ENCODE measurements at regions of chr6 and their contacts with region 1.

Region 1: DNA sequence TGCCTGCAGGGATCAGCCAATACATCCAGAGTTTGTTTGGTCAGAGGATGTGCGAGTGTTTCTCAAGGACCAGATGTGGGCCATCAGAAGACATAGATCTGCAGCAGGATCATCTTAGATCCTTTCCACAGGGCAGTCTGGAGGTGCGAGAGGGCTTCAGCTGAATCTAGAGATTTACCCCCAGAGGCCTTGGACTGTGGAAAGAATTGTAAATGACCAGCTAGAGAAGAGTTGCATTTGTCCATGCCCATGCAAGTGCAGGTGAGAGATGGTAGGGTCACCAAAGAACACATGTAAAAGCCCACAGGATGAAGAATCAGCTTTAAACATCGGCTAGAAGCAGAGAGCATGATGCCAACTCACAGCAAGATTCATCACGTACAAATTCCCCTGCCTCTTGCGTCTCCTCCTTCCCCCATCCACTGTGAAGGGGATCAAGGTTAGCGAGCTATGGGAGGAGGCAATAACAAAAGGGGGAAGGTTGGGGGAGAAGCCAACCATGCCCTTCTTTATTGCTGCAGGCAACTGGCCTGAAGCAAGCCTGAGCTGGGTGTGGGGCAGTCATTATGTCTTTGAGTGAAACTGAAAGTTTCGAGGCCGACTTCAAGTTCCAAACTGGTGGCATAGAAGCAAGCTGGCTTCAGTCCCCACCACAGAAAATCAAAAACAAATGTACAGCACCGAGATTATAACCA is 83.5 kb downstream of the SCML4 start:
- DNase-seq: peak in 1 of 5 donors; percentile 44
- H3K4me3 ChIP-seq: peak overlapping the region; percentile 49
- H3K4me3 Mint-ChIP-seq: peak overlapping the region; percentile 10 to 92 (median 83)
- H3K27ac ChIP-seq: peak overlapping the region; percentile 14
- H3K27ac Mint-ChIP-seq: peak overlapping the region; percentile 79 to 96 (median 92)
- H3K4me1 ChIP-seq: peaks cover 66% of the 10 kb centered on the region
- H3K4me1 Mint-ChIP-seq: peaks cover 80 to 95% (median 88%) of the 10 kb centered on the region in 3 donors
- H3K27me3 ChIP-seq: no peaks in the 10 kb centered on the region
- H3K27me3 Mint-ChIP-seq: no peaks in the 10 kb centered on the region

Region 2: GRCh38 chr6:107786709-107787588 is 46.3 kb after region 1 on chr6:
- CTCF ChIA-PET with region 1: interaction called, 15 read pairs
- POLR2A ChIA-PET with region 1: interaction called, 14 read pairs
- DNase-seq: peak; percentile 16 to 72 (median 58)
- H3K4me3 ChIP-seq: peak overlapping the region; percentile 33
- H3K4me3 Mint-ChIP-seq: peak overlapping the region; percentile 61 to 91 (median 84)
- H3K27ac ChIP-seq: peak overlapping the region; percentile 9
- H3K27ac Mint-ChIP-seq: peak overlapping the region; percentile 88 to 96 (median 92)
- H3K4me1 ChIP-seq: peaks cover 85% of the 10 kb centered on the region
- H3K4me1 Mint-ChIP-seq: peaks cover 80 to 90% (median 88%) of the 10 kb centered on the region in 3 donors
- H3K27me3 ChIP-seq: no peaks in the 10 kb centered on the region
- H3K27me3 Mint-ChIP-seq: peaks cover 0 to 2% of the 10 kb centered on the region in 2 donors

Region 3: DNA sequence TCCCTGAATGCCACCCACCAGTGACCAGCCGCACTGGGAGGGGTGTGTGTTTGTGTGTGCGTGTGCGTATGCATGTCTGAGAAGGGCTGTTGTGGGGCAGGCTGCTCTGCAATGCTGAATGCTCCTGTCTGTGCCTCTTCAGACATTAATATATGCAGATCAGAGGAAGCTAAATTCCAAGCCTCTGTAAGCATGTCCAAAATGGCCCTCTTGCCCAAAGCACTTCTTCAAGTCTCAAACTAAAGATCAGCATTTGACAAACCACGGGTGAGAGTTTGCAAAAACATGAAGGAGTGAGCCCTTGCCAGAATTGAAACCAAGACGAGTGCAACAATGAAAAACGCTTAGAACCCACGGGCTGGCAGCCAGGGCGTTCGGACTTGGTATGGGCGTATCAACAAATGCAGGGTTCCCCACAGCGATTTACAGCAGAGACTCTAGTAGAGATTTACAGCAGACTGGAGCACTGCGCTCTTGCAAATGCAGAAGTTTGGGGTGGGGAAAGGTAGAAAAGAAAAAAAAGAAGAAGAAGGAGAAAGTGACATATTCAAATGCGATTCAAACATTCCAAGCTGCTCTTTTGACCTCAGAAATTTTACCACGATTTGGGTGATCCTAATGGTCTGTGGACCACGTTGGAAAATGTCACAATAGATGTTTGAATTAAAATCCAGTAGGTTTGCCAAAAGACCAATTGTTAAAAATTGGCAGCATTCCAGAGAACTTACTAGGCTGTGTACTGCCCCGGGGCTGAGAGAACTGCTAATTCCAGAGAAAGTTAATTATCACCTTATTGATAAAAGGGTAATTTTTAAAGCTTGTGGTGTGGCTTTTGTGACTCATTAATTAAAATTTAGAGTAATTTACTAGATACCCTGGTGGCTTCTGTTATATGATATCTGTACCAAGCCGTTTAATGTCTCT is 80.0 kb after region 1 on chr6:
- CTCF ChIA-PET with region 1: interaction called, 6 read pairs
- POLR2A ChIA-PET with region 1: interaction called, 31 read pairs
- DNase-seq: peak in 4 of 5 donors; percentile 12 to 62 (median 48)
- H3K4me3 ChIP-seq: peak overlapping the region; percentile 68
- H3K4me3 Mint-ChIP-seq: peak overlapping the region; percentile 93 to 97 (median 97)
- H3K27ac ChIP-seq: peak overlapping the region; percentile 92
- H3K27ac Mint-ChIP-seq: peak overlapping the region; percentile 95 to 100 (median 100)
- H3K4me1 ChIP-seq: peaks cover 71% of the 10 kb centered on the region
- H3K4me1 Mint-ChIP-seq: peaks cover 75 to 89% (median 86%) of the 10 kb centered on the region in 3 donors
- H3K27me3 ChIP-seq: no peaks in the 10 kb centered on the region
- H3K27me3 Mint-ChIP-seq: no peaks in the 10 kb centered on the region

Measured in CD8-positive, alpha-beta memory T cell (primary cell).